Astrocyte of the cerebellum (primary cell): ENCODE measurements at regions of chr6 and their contacts with region 1.

Region 1: GRCh38 chr6:110876170-110876773 is 1.7 kb downstream of the AMD1 start:
- DNase-seq: peak; percentile 59
- H3K4me3 ChIP-seq: peak overlapping the region; percentile 75
- CTCF ChIP-seq: no peak

Region 2: DNA sequence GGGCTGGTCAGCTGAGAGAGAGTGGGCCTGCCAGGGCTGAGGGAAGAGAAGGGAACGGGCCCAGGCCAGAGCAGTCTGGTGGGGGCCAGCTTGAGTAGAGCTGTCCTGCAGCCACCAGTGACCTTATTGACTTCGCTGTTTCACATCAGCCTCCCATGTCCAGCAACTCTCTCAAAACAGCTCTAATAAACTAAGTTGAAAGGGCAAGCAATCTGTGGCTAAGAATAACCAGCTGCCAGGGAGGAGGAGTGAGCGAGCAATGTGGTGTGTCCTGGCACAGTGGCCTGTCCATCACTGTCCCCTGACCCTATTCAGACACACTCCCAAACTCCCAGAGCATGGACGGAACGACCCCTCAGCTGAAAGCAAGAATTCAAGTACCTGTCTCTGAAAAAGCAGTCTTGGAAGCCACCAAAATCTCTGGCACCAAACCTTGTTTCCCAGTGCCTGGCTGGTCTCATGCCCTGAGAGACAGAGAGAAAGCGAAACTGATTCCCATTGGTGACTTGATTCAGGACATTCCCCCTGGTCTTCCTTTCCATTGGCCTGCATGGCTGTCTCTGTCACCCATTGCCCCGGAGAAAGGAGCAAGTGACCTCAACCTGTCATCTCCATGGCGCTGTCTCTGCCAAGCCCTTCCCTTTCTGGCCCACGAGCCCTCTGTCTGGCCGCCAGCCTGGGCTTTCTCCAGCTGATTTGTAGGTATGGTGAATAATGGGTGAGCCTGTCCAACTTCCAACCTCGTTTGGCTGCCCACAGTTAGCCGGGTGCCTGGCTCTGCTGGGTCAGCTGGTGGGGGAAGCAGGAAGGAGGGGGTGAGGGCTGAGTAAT is 461.0 kb before region 1 on chr6 and contains the start of gene DDO:
- in situ Hi-C with region 1: no loop called
- DNase-seq: peak; percentile 6
- H3K4me3 ChIP-seq: peak within 1 kb of the TSS; percentile 18
- CTCF ChIP-seq: no peak

Region 3: GRCh38 chr6:110690084-110690650 is 186.1 kb before region 1 on chr6:
- in situ Hi-C with region 1: loop called (anchors 5 kb)
- DNase-seq: no peak
- H3K4me3 ChIP-seq: no peak overlapping the region
- CTCF ChIP-seq: no peak

Region 4: GRCh38 chr6:110815217-110816109 is 60.8 kb before region 1 on chr6 and contains the start of gene CDK19:
- in situ Hi-C with region 1: loop called (anchors 5 kb)
- DNase-seq: peak; percentile 94
- H3K4me3 ChIP-seq: peak within 1 kb of the TSS; percentile 84
- CTCF ChIP-seq: no peak

Region 5: DNA sequence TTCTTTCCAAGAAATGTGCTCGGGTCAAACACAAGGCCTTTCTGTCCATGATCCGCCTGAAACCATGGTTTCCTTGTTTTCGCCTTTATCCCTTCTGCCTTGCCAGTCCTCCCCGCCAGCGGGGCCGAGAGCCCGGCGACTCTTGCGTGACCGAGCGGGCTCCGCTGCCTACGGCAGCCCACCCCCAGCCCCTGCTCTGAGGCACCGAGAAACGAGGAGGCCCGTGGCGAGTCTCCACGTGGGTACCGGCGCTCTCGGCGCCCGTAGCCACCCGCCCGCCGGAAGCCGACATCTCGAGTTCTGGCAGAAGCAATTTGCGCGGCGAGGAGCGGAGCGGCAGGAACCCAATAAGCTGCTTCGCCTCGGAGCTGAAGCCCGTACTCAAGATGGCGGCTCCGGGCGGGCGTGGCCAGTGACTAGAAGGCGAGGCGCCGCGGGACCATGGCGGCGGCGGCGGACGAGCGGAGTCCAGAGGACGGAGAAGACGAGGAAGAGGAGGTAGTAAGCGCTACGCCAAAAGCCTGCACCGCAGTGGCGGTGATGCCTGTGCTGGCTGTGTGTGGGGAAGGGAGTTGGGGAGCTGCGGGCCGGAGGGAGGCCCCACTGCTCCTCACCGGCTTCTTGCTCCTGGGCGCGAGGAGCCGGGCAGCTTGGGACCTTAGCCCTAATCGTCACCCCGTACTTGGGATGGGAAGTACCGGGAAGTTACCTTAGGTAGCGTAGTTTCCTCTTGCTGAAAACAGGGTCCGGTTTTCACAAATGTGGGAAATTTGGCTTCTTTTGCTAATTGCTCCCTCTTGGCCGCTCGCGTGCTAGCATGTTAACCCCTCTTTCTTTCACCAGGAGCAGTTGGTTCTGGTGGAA is 82.3 kb after region 1 on chr6 and contains the start of gene GTF3C6:
- in situ Hi-C with region 1: loop called (anchors 5 kb)
- DNase-seq: peak; percentile 78
- H3K4me3 ChIP-seq: peak within 1 kb of the TSS; percentile 70
- CTCF ChIP-seq: no peak

Region 6: GRCh38 chr6:112173221-112173804 is 1297.0 kb after region 1 on chr6:
- in situ Hi-C with region 1: no loop called
- DNase-seq: no peak
- H3K4me3 ChIP-seq: no peak overlapping the region
- CTCF ChIP-seq: no peak